Adrenal gland (tissue), 19 donors: ENCODE measurements at regions of chr1 and their contacts with region 1.

Region 1: DNA sequence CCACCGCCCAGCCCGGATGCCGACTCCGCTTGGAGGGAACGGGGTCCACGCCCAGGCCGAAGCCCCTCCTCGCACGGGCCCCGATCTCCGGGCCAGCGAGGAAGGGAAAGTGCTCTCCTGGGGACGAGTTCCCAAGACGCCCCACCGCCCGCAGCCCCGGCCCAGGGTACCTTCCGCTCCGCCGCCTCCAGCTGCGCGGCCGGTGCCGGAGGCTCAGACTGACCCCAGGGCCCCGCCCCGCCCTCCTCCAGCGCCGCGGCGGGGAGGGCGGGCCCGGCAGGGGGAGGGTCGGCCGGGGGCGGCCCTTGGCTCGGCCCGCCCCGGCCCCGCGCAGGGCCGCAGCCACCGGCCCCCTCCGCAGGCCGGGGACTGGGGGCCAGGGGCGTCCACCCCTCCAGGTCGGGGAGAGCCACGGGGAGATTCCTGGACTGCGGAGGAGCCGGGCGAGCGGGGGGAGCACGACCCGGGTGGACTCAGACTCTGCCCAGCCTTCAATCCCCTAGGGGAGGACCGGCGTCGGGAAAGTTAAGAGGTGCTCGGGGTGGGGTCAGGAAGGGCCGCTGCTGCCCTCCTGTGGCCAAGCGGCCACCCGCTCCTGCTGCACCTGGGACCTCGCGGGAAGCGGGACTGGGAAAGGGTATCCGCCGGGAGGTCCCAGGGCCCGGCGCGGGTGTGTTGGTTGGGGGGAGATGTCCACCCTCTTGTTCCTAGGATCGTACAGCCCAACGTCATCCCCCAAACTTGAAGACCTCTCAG is at the start of gene RHOC:
- DNase-seq: peak; percentile 90 to 94 (median 92)
- H3K4me3 ChIP-seq: peak within 1 kb of the TSS; percentile 85 to 99 (median 93)
- H3K27ac ChIP-seq: peak within 1 kb of the TSS; percentile 56 to 95 (median 92)
- H3K4me1 ChIP-seq: peaks cover 23 to 35% of the 10 kb centered on the region in 2 donors
- H3K27me3 ChIP-seq: no peaks in the 10 kb centered on the region
- CTCF ChIP-seq: peak; percentile 87 to 94 (median 88)
- POLR2A ChIP-seq: peak; percentile 68 to 78
- total RNA-seq, gene RHOC: 191 to 374 (median 237) TPM

Region 2: GRCh38 chr1:112390775-112391602 is 316.1 kb before region 1 on chr1:
- intact Hi-C with region 1: loop called (anchors 5 kb)
- DNase-seq: peak; percentile 88 to 97 (median 91)
- H3K4me3 ChIP-seq: peak overlapping the region in 2 of 4 donors; percentile 26 to 34
- H3K27ac ChIP-seq: peak overlapping the region in 4 of 5 donors; percentile 1 to 65 (median 60)
- H3K4me1 ChIP-seq: peaks cover 20 to 33% of the 10 kb centered on the region in 2 donors
- H3K27me3 ChIP-seq: no peaks in the 10 kb centered on the region
- CTCF ChIP-seq: peak; percentile 88 to 97 (median 95)
- POLR2A ChIP-seq: no peak

Region 3: GRCh38 chr1:112395821-112396652 is 311.0 kb before region 1 on chr1 and contains the start of gene CTTNBP2NL:
- intact Hi-C with region 1: loop called in 1 of 2 experiments (anchors 5 kb)
- DNase-seq: peak; percentile 96 to 98 (median 97)
- H3K4me3 ChIP-seq: peak within 1 kb of the TSS; percentile 7 to 100 (median 76)
- H3K27ac ChIP-seq: peak within 1 kb of the TSS; percentile 35 to 91 (median 86)
- H3K4me1 ChIP-seq: peaks cover 19 to 49% of the 10 kb centered on the region in 2 donors
- H3K27me3 ChIP-seq: no peaks in the 10 kb centered on the region
- CTCF ChIP-seq: no peak
- POLR2A ChIP-seq: peak in 1 of 2 donors; percentile 59
- total RNA-seq, gene CTTNBP2NL: 5.5 to 22.0 (median 16.4) TPM

Region 4: GRCh38 chr1:112501810-112502641 is 205.1 kb before region 1 on chr1:
- intact Hi-C with region 1: loop called (anchors 5 kb)
- DNase-seq: peak; percentile 70 to 83 (median 80)
- H3K4me3 ChIP-seq: peak overlapping the region in 2 of 4 donors; percentile 44 to 74
- H3K27ac ChIP-seq: peak overlapping the region in 2 of 5 donors; percentile 47 to 50
- H3K4me1 ChIP-seq: peaks cover 0 to 10% of the 10 kb centered on the region in 2 donors
- H3K27me3 ChIP-seq: no peaks in the 10 kb centered on the region
- CTCF ChIP-seq: peak; percentile 58 to 77 (median 68)
- POLR2A ChIP-seq: peak in 1 of 2 donors; percentile 8

Region 5: DNA sequence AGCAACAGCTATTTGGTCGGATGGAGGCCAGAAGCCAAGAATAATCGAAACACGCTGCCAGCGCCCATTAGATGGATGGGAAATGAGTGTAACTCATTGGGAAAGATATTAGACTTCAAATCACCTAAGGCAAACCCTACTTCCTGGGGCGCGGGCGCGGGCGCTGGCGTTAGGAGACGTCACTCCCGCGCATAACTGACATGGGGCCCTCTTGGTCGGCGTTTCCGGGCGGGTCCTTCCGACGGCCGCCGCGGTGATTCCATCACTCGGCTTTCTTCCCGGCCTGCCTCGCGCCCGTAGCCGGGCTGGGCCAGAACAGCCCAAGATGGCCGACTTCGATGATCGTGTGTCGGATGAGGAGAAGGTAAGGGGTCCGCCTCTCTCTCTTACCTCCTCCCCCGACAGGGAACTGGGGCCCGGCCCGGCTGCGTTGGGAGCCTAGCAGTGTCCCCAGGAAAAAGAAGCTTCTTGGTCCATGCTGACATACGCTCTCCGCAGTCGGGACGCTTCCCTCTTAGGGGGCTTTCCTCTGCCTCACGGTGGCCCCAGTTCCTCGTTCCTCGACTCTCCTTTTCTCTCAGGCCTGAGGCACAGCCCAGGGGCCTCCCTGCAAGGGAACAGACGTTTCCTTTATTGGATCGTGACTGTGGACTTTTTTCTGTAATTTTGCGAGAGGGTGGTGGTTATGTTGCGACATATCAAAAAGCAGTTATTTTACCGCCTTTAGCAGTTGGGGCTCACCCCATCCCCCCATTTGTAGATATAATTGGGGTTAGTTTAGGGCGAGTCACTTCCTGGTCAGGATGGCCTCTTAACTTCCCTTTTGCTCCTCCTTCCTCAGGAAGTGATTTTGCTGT is 87.3 kb before region 1 on chr1 and contains the start of gene CAPZA1:
- intact Hi-C with region 1: loop called (anchors 5 kb)
- DNase-seq: peak; percentile 89 to 96 (median 92)
- H3K4me3 ChIP-seq: peak within 1 kb of the TSS; percentile 69 to 93 (median 88)
- H3K27ac ChIP-seq: peak within 1 kb of the TSS; percentile 95 to 99 (median 96)
- H3K4me1 ChIP-seq: peaks cover 17 to 51% of the 10 kb centered on the region in 2 donors
- H3K27me3 ChIP-seq: no peaks in the 10 kb centered on the region
- CTCF ChIP-seq: no peak
- POLR2A ChIP-seq: peak; percentile 71 to 81
- total RNA-seq, gene CAPZA1: 65.2 to 178 (median 96.5) TPM

Region 6: DNA sequence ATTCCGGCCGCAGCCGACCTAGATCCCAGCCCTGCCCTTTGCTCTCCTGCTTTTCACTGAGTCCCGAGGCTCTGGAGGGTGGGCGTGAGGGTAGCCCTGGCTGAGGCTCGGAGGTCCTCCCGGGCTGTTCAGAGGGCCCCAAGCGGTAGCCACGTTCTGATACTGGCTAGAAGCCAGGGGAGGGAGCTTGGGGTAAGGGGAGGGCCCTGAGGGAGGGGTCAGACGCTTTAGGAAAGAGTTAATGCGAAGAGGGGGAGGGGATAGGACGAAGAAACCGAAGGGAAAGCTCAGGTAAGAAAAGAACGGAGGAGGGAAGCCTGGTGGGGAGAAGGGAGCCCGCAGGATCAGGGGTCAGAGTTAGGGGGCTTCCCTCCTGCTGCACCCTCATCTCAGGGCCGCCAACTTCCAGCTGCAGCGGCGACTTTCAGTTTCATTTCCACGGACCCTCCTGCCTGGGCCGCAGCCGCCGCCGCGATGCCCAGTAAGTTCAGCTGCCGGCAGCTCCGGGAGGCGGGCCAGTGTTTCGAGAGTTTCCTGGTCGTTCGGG is 32.6 kb before region 1 on chr1 and contains the start of gene MOV10:
- intact Hi-C with region 1: loop called in 1 of 2 experiments (anchors 5 kb)
- DNase-seq: peak; percentile 62 to 89 (median 79)
- H3K4me3 ChIP-seq: peak within 1 kb of the TSS; percentile 57 to 93 (median 78)
- H3K27ac ChIP-seq: peak within 1 kb of the TSS; percentile 85 to 98 (median 87)
- H3K4me1 ChIP-seq: peaks cover 19 to 33% of the 10 kb centered on the region in 2 donors
- H3K27me3 ChIP-seq: no peaks in the 10 kb centered on the region
- CTCF ChIP-seq: peak in 1 of 6 experiments; percentile 28
- POLR2A ChIP-seq: peak in 1 of 2 donors; percentile 52
- total RNA-seq, gene MOV10: 39.1 to 86.7 (median 61.0) TPM

Region 7: DNA sequence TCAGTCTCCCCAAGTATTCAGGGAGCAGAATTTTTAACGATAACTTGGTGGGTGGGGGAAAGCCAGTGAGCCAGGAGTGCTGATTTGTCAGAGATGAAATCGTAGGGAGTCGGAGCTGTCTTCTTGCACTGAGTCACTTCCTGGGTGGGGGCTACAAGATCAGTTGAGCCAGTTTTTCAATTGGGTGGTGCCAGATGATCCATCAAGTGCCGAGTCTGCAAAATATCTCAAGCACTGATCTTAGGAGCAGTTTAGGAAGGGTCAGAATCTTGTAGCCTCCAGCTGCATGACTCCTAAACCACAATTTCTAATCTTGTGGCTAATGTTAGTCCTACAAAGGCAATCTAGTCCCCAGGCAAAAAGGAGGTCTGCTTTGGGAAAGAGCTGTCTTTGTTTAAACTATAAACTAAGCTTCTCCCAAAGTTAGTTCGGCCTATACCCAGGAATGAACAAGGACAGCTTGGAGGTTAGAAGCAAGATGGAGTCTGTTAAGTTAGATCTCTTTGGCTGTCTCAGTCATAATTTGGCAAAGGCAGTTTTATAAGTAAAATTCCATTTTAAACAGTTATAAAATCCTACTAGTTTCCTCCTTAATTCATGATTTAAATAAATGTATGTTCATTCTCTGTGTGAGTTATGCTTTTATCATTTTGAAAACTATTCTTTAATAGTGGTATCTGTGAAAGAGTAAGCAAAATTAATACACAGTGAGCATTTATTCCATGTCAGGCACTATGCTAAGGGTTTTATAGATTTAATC is 197.2 kb after region 1 on chr1:
- intact Hi-C with region 1: no loop called
- DNase-seq: no peak
- H3K4me3 ChIP-seq: no peak overlapping the region
- H3K27ac ChIP-seq: peak overlapping the region in 1 of 5 donors; percentile 17
- H3K4me1 ChIP-seq: peaks cover 0 to 16% of the 10 kb centered on the region in 2 donors
- H3K27me3 ChIP-seq: no peaks in the 10 kb centered on the region
- CTCF ChIP-seq: no peak
- POLR2A ChIP-seq: no peak